Motor neuron (in vitro differentiated cells): ENCODE measurements at regions of chr17 and their contacts with region 1.

Region 1: GRCh38 chr17:64572638-64573154 is 65.9 kb downstream of the CEP95 start:
- ATAC-seq: peak in 2 of 8 experiments; percentile 45 to 59
- H3K4me3 ChIP-seq: no peak overlapping the region
- H3K27ac ChIP-seq: no peak overlapping the region
- H3K4me1 ChIP-seq: no peaks in the 10 kb centered on the region

Region 2: DNA sequence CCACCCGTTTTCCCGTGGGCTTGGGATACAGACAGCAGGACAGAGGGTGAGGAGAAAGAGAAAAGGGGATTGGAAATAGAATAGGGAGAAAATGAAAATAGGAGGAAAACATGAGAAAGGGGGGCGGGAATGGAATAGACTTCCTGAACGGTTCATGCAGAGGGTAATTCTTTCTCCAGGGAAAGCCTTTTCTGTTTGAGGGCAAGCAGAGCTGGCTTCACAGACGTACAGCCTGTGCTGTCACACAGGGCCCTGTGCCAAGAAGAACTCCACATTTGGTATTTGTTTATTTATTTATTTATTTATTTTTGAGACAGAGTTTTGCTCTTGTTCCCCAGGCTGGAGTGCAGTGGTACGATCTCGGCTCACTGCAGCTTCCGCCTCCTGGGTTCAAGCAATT is 111.7 kb before region 1 on chr17:
- in situ Hi-C with region 1: no loop called
- ATAC-seq: no peak
- H3K4me3 ChIP-seq: no peak overlapping the region
- H3K27ac ChIP-seq: no peak overlapping the region
- H3K4me1 ChIP-seq: no peaks in the 10 kb centered on the region

Region 3: GRCh38 chr17:64736804-64737492 is 164.3 kb after region 1 on chr17:
- in situ Hi-C with region 1: loop called in 1 of 9 experiments (anchors 25 kb)
- ATAC-seq: peak in 3 of 8 experiments; percentile 9 to 12 (median 9)
- H3K4me3 ChIP-seq: no peak overlapping the region
- H3K27ac ChIP-seq: no peak overlapping the region
- H3K4me1 ChIP-seq: no peaks in the 10 kb centered on the region